ENCODE measurements at regions of chr19 and their contacts with region 1.

Region 1: GRCh38 chr19:6021878-6022569 is 44.1 kb upstream of the RANBP3 start:
- DNase-seq: peak; percentile 55 to 66
- ATAC-seq: peak; percentile 83 to 96
- H3K4me3 ChIP-seq: no peak overlapping the region
- H3K27ac ChIP-seq: no peak overlapping the region
- H3K4me1 ChIP-seq: no peaks in the 10 kb centered on the region
- CTCF ChIP-seq: peak; percentile 55
- EP300 ChIP-seq: no peak
- POLR2A ChIP-seq: no peak
- RAD21 ChIP-seq: peak; percentile 50 to 65

Region 2: GRCh38 chr19:6000228-6000847 is 21.7 kb before region 1 on chr19:
- CTCF ChIA-PET with region 1: interaction called, 11 read pairs
- POLR2A ChIA-PET with region 1: no interaction called
- DNase-seq: no peak
- ATAC-seq: no peak
- H3K4me3 ChIP-seq: no peak overlapping the region
- H3K27ac ChIP-seq: no peak overlapping the region
- H3K4me1 ChIP-seq: no peaks in the 10 kb centered on the region
- CTCF ChIP-seq: no peak
- EP300 ChIP-seq: no peak
- POLR2A ChIP-seq: no peak
- RAD21 ChIP-seq: no peak

Region 3: DNA sequence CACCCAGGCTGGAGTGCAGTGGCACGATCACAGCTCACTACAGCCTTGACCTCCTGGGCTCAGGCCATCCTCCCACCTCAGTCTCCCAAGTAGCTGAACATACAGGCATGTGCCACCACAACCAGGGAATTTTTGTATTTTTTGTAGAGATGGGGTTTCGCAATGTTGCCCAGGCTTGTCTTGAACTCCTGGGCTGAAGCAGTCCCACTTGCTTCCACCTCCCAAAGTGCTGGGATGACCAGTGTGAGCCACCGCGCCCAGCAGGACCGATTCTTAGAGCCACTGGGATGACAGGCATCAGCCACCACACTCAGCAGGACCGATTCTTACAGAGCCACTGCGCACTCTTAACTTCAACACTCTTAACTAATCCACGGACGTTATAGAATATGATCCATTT is 10.8 kb after region 1 on chr19:
- CTCF ChIA-PET with region 1: interaction called, 12 read pairs
- POLR2A ChIA-PET with region 1: no interaction called
- DNase-seq: no peak
- ATAC-seq: no peak
- H3K4me3 ChIP-seq: no peak overlapping the region
- H3K27ac ChIP-seq: no peak overlapping the region
- H3K4me1 ChIP-seq: no peaks in the 10 kb centered on the region
- CTCF ChIP-seq: no peak
- EP300 ChIP-seq: no peak
- POLR2A ChIP-seq: no peak
- RAD21 ChIP-seq: no peak

Measured in A549 (cell line).